ENCODE measurements at regions of chr4 and their contacts with region 1.

Region 1: GRCh38 chr4:41569961-41570360 is 32.0 kb downstream of the LIMCH1 start:
- DNase-seq: peak; percentile 33 to 70
- ATAC-seq: peak; percentile 79 to 97 (median 90)
- H3K4me3 ChIP-seq: no peak overlapping the region
- H3K27ac ChIP-seq: peak overlapping the region; percentile 10 to 87 (median 79)
- H3K4me1 ChIP-seq: peaks cover 0 to 88% (median 74%) of the 10 kb centered on the region in 9 donors
- H3K27me3 ChIP-seq: no peaks in the 10 kb centered on the region
- CTCF ChIP-seq: peak in 4 of 9 donors; percentile 4 to 24 (median 8)

Region 2: DNA sequence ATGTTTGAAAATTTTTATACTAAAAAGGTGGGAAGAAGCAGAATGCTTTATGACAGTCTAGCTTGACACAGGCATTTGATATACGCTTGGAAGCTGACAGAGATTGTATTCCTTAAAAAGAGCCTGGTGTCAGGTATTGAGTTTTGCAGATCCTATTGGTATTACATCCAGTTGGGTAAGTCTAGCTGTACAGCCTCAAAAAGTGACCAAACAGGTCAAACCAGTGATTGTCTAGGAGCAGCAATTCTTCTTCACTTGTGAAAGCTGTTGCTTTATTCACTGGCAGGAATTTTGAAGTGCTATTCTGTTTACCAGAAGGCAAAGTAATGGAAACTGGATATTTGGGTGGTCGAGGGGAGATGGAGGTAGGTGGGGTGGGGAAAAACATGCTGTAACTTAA is 235.8 kb before region 1 on chr4:
- intact Hi-C with region 1: no loop called
- DNase-seq: no peak
- ATAC-seq: no peak
- H3K4me3 ChIP-seq: no peak overlapping the region
- H3K27ac ChIP-seq: no peak overlapping the region
- H3K4me1 ChIP-seq: peaks cover 0 to 12% (median 0%) of the 10 kb centered on the region in 9 donors
- H3K27me3 ChIP-seq: no peaks in the 10 kb centered on the region
- CTCF ChIP-seq: no peak

Region 3: DNA sequence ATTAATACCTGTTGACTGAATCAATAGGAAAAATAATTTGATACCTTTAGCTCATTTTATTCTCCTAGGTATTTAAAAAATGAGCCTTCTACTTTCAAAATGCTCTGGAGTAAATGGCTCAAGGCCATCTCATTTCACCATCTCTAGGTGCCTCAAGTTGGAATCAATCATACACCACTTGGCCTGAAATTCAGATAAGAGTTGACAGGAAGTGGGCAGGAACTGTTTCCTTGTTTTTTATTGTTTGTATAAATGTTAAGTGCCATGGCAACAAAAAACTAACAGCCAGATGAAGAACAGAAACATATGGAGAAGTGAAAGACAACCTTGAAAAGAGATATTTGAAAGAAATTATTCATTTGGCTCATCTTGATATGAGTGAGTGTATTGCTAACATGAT is 19.7 kb before region 1 on chr4:
- intact Hi-C with region 1: loop called in 1 of 10 experiments (anchors 2 kb)
- DNase-seq: no peak
- ATAC-seq: peak in 4 of 8 donors; percentile 34 to 87 (median 56)
- H3K4me3 ChIP-seq: no peak overlapping the region
- H3K27ac ChIP-seq: peak overlapping the region in 7 of 10 donors; percentile 1 to 28 (median 6)
- H3K4me1 ChIP-seq: peaks cover 2 to 73% (median 52%) of the 10 kb centered on the region in 9 donors
- H3K27me3 ChIP-seq: no peaks in the 10 kb centered on the region
- CTCF ChIP-seq: no peak

Region 4: GRCh38 chr4:41611881-41612871 is 42.2 kb after region 1 on chr4:
- intact Hi-C with region 1: loop called in 1 of 10 experiments (anchors 5 kb)
- DNase-seq: peak; percentile 64 to 66
- ATAC-seq: peak; percentile 92 to 96 (median 93)
- H3K4me3 ChIP-seq: peak overlapping the region in 7 of 10 donors; percentile 0 to 39 (median 32)
- H3K27ac ChIP-seq: peak overlapping the region; percentile 19 to 82 (median 68)
- H3K4me1 ChIP-seq: peaks cover 6 to 44% (median 32%) of the 10 kb centered on the region in 9 donors
- H3K27me3 ChIP-seq: no peaks in the 10 kb centered on the region
- CTCF ChIP-seq: peak in 4 of 9 donors; percentile 6 to 37 (median 22)

Region 5: GRCh38 chr4:41751449-41752061 is 181.6 kb after region 1 on chr4:
- intact Hi-C with region 1: no loop called
- DNase-seq: no peak
- ATAC-seq: no peak
- H3K4me3 ChIP-seq: no peak overlapping the region
- H3K27ac ChIP-seq: no peak overlapping the region
- H3K4me1 ChIP-seq: peaks cover 0 to 17% (median 10%) of the 10 kb centered on the region in 9 donors
- H3K27me3 ChIP-seq: peaks cover 18 to 100% (median 99%) of the 10 kb centered on the region in 7 donors
- CTCF ChIP-seq: peak in 5 of 9 donors; percentile 8 to 27 (median 17)

Region 6: DNA sequence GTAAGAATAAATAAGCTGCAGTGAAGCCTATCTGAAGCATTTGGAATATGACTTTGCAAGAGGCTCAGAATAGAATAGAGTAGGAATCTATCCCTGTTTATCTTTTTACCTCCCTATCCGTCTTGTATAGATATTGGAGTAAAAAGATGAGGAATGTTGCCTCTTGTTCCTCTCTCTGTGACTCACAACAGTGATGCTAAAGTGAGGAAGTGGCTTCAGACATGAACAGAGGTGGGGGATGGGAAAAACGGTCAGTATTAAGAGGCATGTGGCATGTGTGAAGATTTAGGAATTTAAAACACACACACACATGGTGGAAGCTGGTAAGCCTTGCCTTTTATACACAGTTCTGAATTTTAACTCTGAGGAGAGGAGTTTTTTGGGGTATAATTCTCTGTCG is 407.7 kb after region 1 on chr4:
- intact Hi-C with region 1: no loop called
- DNase-seq: no peak
- ATAC-seq: no peak
- H3K4me3 ChIP-seq: no peak overlapping the region
- H3K27ac ChIP-seq: no peak overlapping the region
- H3K4me1 ChIP-seq: peaks cover 0 to 8% (median 0%) of the 10 kb centered on the region in 9 donors
- H3K27me3 ChIP-seq: no peaks in the 10 kb centered on the region
- CTCF ChIP-seq: no peak

Measured in heart right ventricle (tissue), 16 donors.